Activated CD4-positive, alpha-beta memory T cell treated with anti-CD3 and anti-CD28 coated beads for 36 hours (primary cell): ENCODE measurements at regions of chr18 and their contacts with region 1.

Region 1: DNA sequence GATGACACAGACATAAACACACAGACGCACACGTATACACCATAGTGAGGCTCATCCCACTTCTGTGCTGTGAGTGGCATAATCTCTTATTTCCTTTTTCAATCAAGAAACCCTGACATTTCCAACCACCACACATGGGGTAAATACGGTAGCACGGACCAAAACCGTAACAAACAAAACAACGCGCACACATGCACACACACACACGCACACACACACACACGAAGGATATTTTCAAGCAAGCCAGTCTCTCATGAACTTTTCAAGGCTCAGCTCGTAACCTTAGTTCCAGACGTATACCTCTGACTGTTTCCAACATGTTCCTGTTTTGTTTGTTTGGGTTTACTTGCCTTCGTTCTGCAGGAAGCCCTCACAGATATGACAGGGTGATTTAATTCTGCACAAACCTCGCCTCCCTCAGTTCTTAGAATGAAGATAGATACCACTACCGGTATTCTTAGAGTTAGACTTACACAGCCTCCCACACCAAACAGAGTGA is 119.8 kb downstream of the BCL2 start:
- DNase-seq: peak; percentile 59
- H3K4me3 Mint-ChIP-seq: no peak overlapping the region
- H3K27ac Mint-ChIP-seq: no peak overlapping the region
- H3K4me1 Mint-ChIP-seq: peaks cover 41% of the 10 kb centered on the region
- H3K27me3 Mint-ChIP-seq: no peaks in the 10 kb centered on the region

Region 2: GRCh38 chr18:63111671-63112402 is 88.0 kb before region 1 on chr18:
- CTCF ChIA-PET with region 1: no interaction called
- POLR2A ChIA-PET with region 1: no interaction called
- intact Hi-C with region 1: no loop called
- DNase-seq: no peak
- H3K4me3 Mint-ChIP-seq: no peak overlapping the region
- H3K27ac Mint-ChIP-seq: no peak overlapping the region
- H3K4me1 Mint-ChIP-seq: peaks cover 15% of the 10 kb centered on the region
- H3K27me3 Mint-ChIP-seq: peaks cover 2% of the 10 kb centered on the region

Region 3: DNA sequence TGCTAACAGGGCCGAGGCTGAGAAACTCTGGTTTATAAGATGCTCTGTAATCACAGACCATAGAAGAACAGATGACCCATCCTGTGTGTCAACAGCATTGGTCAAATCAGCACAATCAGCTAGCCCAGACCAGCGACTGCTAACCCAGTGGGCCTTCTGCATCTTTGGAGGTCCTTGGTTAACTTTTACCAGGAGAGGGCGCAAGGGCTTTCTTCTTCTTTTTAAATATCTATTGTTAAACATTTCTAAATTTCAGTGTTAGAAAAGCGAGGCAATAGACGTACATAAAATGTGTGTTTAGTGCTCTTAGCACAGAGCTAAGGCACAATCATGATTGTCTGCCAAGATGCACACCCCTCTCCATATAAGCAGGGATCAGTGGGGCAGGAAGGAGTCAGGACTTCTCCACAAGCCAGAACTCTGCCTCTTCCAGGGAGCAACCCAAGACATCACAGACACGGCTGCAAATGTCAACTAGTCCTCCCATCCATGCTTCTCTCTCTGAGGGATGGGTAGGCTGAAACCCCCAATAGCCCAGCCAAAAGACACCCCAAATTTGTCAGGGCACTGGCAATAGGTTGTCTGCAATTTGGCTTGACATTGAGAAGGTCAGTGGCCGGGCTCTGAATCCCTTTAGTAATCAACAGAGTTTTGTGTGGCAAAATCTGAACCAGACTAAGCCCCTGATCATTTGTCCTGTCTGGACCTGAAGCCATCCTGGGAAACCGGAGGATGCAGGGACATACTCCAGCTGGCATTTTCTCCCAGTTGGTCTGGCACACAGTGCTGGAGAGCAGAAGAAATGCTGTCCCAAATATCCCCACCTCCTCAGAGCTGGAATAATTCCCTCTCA is 68.5 kb before region 1 on chr18:
- CTCF ChIA-PET with region 1: interaction called, 17 read pairs
- POLR2A ChIA-PET with region 1: no interaction called
- intact Hi-C with region 1: loop called (anchors 2 kb)
- DNase-seq: peak; percentile 64
- H3K4me3 Mint-ChIP-seq: no peak overlapping the region
- H3K27ac Mint-ChIP-seq: peak overlapping the region; percentile 65
- H3K4me1 Mint-ChIP-seq: peaks cover 30% of the 10 kb centered on the region
- H3K27me3 Mint-ChIP-seq: no peaks in the 10 kb centered on the region

Region 4: DNA sequence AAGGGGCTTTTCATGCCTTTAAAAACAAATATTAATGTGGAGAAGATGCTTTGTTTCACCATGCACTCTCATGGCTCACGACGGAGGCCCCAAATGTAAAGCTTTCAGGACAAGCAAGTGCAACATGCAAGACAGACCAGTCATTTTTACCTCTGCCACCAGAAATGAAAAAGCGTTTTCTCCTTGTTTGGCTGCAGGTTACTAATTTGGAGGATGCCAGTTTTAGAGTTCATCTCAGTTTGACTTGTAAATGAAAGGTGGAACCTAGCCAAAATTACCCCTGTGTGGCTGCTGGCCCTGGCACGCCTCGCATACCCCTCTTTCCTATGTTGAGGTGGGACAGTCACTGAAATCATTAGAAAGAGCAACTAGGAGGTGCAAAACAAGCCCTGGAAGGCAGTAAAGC is 18.8 kb before region 1 on chr18:
- CTCF ChIA-PET with region 1: interaction called, 6 read pairs
- POLR2A ChIA-PET with region 1: interaction called, 6 read pairs
- intact Hi-C with region 1: loop called (anchors 1 kb)
- DNase-seq: peak; percentile 73
- H3K4me3 Mint-ChIP-seq: no peak overlapping the region
- H3K27ac Mint-ChIP-seq: peak overlapping the region; percentile 78
- H3K4me1 Mint-ChIP-seq: peaks cover 81% of the 10 kb centered on the region
- H3K27me3 Mint-ChIP-seq: no peaks in the 10 kb centered on the region

Region 5: GRCh38 chr18:63311118-63312018 is 111.6 kb after region 1 on chr18:
- CTCF ChIA-PET with region 1: interaction called, 3 read pairs
- POLR2A ChIA-PET with region 1: no interaction called
- intact Hi-C with region 1: loop called (anchors 1 kb)
- DNase-seq: no peak
- H3K4me3 Mint-ChIP-seq: no peak overlapping the region
- H3K27ac Mint-ChIP-seq: peak overlapping the region; percentile 14
- H3K4me1 Mint-ChIP-seq: peaks cover 85% of the 10 kb centered on the region
- H3K27me3 Mint-ChIP-seq: no peaks in the 10 kb centered on the region